Endothelial cell of umbilical vein (primary cell): ENCODE measurements at regions of chr1 and their contacts with region 1.

Region 1: GRCh38 chr1:229156872-229157271 is 114.0 kb upstream of the RAB4A start:
- DNase-seq: no peak
- H3K4me3 ChIP-seq: no peak overlapping the region
- H3K27ac ChIP-seq: no peak overlapping the region
- H3K4me1 ChIP-seq: no peaks in the 10 kb centered on the region
- H3K27me3 ChIP-seq: no peaks in the 10 kb centered on the region
- CTCF ChIP-seq: peak; percentile 6 to 33
- POLR2A ChIP-seq: no peak

Region 2: GRCh38 chr1:228646717-228647522 is 510.0 kb before region 1 on chr1:
- CTCF ChIA-PET with region 1: no interaction called
- POLR2A ChIA-PET with region 1: no interaction called
- dilution Hi-C with region 1: no loop called
- intact Hi-C with region 1: no loop called
- DNase-seq: peak; percentile 5
- H3K4me3 ChIP-seq: peak overlapping the region in 2 of 3 experiments; percentile 17 to 29
- H3K27ac ChIP-seq: no peak overlapping the region
- H3K4me1 ChIP-seq: peaks cover 4% of the 10 kb centered on the region
- H3K27me3 ChIP-seq: peaks cover 25 to 39% of the 10 kb centered on the region in 2 experiments
- CTCF ChIP-seq: no peak
- POLR2A ChIP-seq: no peak

Region 3: DNA sequence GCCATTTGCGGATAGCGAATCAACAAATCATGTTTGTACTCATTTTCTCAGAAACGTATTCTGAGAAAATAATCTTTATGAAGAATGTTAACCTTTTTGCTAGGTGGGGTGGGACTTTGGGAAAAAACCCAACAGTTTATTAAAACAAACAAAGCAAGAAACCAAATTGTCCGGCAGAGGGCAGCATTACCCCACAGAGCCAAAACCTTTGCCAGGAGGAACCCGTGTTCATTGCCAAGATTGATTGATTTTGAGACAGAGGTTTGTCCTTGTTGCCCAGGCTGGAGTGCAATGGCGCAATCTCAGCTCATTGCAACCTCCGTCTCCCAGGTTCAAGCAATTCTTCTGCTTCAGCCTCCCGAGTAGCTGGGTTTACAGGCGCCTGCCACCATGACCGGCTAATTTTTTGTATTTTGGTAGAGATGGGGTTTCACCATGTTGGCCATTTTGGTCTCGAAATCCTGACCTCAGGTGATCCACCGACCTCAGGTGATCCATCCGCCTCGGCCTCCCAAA is 492.4 kb before region 1 on chr1:
- CTCF ChIA-PET with region 1: interaction called, 10 read pairs
- POLR2A ChIA-PET with region 1: no interaction called
- dilution Hi-C with region 1: no loop called
- intact Hi-C with region 1: loop called (anchors 2 kb)
- DNase-seq: peak; percentile 61
- H3K4me3 ChIP-seq: no peak overlapping the region
- H3K27ac ChIP-seq: no peak overlapping the region
- H3K4me1 ChIP-seq: no peaks in the 10 kb centered on the region
- H3K27me3 ChIP-seq: no peaks in the 10 kb centered on the region
- CTCF ChIP-seq: peak; percentile 60 to 66
- POLR2A ChIP-seq: no peak

Region 4: DNA sequence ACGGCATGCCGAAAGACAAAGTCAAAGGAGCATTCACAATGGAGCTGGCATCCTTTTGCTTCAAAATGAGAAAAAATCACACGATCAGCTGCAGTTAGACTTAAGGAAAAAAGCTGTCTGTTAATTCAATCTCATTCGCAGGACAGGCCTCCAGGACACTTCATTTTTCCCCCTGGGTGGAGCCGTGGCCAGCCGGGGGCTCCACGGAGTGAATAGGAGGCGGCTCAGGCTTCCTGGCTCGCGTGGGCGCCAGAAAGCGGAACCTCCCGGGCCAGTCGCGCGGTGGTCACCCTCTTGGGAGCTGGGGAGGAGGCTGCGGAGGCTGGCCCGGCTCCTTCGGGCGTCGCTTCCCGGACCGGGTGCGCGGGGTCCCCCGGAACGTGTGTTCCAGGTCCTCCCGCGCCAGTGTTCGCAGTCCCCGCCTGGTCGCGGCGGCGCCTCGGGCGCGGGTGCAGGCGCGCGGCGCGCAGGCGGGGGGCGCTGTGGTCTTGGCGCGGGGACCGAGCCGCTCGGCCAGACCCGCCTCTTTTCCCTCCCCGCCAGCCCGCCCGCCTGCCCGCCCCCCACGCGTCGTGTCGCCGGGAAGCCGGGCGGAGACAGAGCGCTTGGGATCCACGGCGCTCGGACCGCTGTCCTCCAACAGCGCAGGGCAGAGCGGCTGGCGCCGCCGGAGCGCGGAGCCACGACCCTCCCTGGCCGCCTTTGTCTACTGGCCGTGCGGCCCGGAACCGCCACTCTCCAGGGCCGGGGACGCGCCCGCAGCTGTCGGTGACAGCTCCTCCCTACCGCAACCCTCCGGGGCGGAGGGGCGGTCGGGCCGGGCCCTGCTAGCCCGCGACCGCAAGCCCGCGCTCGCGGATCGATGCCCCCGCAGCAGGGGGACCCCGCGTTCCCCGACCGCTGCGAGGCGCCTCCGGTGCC is 421.7 kb before region 1 on chr1 and contains the start of gene RHOU:
- CTCF ChIA-PET with region 1: interaction called, 20 read pairs
- POLR2A ChIA-PET with region 1: no interaction called
- dilution Hi-C with region 1: no loop called
- intact Hi-C with region 1: loop called (anchors 5 kb)
- DNase-seq: peak; percentile 51
- H3K4me3 ChIP-seq: peak within 1 kb of the TSS; percentile 24 to 62 (median 52)
- H3K27ac ChIP-seq: no peak within 1 kb of the TSS
- H3K4me1 ChIP-seq: peaks cover 6% of the 10 kb centered on the region
- H3K27me3 ChIP-seq: peaks cover 29 to 40% of the 10 kb centered on the region in 2 experiments
- CTCF ChIP-seq: peak; percentile 33 to 56
- POLR2A ChIP-seq: no peak
- total RNA-seq, gene RHOU: 0.28 and 0.40 TPM in 2 replicates

Region 5: DNA sequence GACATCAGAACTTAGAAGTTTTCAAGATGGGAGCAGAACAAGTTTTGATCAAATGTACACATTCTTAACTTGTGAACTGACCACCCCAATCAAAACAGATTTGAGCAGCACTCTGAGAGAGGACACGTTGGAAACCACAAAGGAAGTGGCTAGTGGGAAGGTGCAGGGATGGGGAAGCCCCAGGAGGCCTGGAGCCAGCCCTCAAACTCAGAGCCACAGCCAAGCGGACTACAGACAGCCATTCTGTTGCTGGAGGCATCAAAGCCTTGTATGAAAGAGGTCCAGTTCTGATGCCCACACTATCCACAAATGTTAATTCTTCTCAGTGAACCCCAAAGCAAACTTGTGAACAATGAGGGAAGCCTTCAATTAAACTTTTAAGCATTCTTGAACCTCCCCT is 29.6 kb before region 1 on chr1:
- CTCF ChIA-PET with region 1: no interaction called
- POLR2A ChIA-PET with region 1: no interaction called
- dilution Hi-C with region 1: no loop called
- intact Hi-C with region 1: no loop called
- DNase-seq: no peak
- H3K4me3 ChIP-seq: no peak overlapping the region
- H3K27ac ChIP-seq: no peak overlapping the region
- H3K4me1 ChIP-seq: no peaks in the 10 kb centered on the region
- H3K27me3 ChIP-seq: no peaks in the 10 kb centered on the region
- CTCF ChIP-seq: no peak
- POLR2A ChIP-seq: no peak

Region 6: DNA sequence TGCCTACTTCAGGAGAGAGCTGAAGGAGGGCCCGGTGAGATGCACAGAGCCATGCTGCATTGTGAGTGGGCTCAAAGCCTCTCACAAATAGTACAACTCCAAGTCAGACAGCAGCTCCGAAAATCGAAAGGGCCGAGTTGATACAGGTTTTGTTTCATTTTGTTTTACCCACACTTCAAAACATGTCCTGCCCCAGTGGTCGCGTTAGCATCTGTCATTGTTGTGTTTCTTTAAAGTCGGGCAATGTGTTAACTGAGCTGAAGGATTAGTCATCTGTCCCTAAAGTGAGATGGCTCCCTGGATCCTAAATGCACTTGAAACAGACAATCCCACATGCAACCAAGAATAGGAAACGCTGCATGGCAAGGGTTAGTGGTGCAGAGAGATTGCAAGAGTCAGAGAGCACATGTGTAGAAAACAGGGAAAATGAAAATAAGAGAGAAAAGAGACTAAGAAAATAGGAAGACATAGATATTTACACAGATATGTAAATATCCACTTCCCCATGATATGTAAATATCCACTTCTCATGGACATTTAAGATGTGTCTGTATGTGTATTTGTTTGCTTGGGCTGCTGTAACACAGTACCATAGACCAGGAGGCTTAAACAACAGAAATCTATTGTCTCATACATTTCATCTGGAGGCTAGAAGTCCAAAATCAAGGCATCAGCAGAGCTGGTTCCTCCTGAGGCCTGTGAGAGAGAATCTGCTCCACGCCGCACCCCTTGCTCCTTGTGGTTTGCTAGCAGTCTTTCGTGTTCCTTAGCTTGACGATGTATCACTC is 17.3 kb before region 1 on chr1:
- CTCF ChIA-PET with region 1: no interaction called
- POLR2A ChIA-PET with region 1: no interaction called
- dilution Hi-C with region 1: no loop called
- intact Hi-C with region 1: no loop called
- DNase-seq: no peak
- H3K4me3 ChIP-seq: no peak overlapping the region
- H3K27ac ChIP-seq: no peak overlapping the region
- H3K4me1 ChIP-seq: no peaks in the 10 kb centered on the region
- H3K27me3 ChIP-seq: no peaks in the 10 kb centered on the region
- CTCF ChIP-seq: no peak
- POLR2A ChIP-seq: no peak

Region 7: GRCh38 chr1:229183588-229183987 is 26.7 kb after region 1 on chr1:
- CTCF ChIA-PET with region 1: no interaction called
- POLR2A ChIA-PET with region 1: no interaction called
- dilution Hi-C with region 1: no loop called
- intact Hi-C with region 1: no loop called
- DNase-seq: no peak
- H3K4me3 ChIP-seq: no peak overlapping the region
- H3K27ac ChIP-seq: no peak overlapping the region
- H3K4me1 ChIP-seq: no peaks in the 10 kb centered on the region
- H3K27me3 ChIP-seq: no peaks in the 10 kb centered on the region
- CTCF ChIP-seq: no peak
- POLR2A ChIP-seq: no peak